BJ (cell line): ENCODE measurements at regions of chr10 and their contacts with region 1.

Region 1: GRCh38 chr10:13284050-13284449 is 15.8 kb downstream of the PHYH start:
- DNase-seq: no peak
- H3K4me3 ChIP-seq: no peak overlapping the region
- H3K27me3 ChIP-seq: no peaks in the 10 kb centered on the region
- CTCF ChIP-seq: no peak

Region 2: GRCh38 chr10:13349463-13350274 is 65.6 kb after region 1 on chr10:
- CTCF ChIA-PET with region 1: no interaction called
- POLR2A ChIA-PET with region 1: interaction called, 12 read pairs
- DNase-seq: no peak
- H3K4me3 ChIP-seq: peak overlapping the region; percentile 67
- H3K27me3 ChIP-seq: peaks cover 14% of the 10 kb centered on the region
- CTCF ChIP-seq: no peak